ENCODE measurements at regions of chr12 and their contacts with region 1.

Region 1: GRCh38 chr12:3218228-3219171 is 141.3 kb downstream of the TSPAN9 start:
- DNase-seq: no peak
- H3K4me3 ChIP-seq: peak overlapping the region in 1 of 2 donors; percentile 5
- H3K27ac ChIP-seq: peak overlapping the region; percentile 85
- H3K4me1 ChIP-seq: peaks cover 58% of the 10 kb centered on the region
- H3K27me3 ChIP-seq: no peaks in the 10 kb centered on the region
- CTCF ChIP-seq: no peak
- POLR2A ChIP-seq: no peak

Region 2: DNA sequence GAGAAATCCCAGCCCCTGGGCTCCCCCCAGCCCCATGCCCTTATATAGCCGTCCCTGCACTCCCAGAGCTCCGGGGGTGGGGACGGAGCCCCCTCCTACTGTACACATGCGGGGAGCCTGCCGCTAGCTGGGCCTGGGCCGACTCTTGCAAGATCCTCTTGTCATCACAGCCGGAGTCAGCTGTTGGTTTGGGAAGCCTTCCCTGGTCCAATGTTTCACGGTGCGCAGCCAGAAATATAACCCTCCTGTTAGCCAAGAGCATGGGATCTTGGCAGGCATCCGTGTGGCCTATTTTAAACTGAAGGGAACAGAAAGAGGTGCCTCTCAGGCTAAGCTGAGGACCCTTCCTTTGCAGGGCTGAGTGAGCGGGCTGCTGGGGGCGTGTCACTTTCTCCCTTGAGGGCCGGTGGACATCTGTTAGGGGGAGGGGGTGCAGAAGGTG is 34.0 kb after region 1 on chr12:
- intact Hi-C with region 1: loop called (anchors 5 kb)
- DNase-seq: peak in 1 of 2 donors; percentile 93
- H3K4me3 ChIP-seq: no peak overlapping the region
- H3K27ac ChIP-seq: peak overlapping the region; percentile 79
- H3K4me1 ChIP-seq: peaks cover 29% of the 10 kb centered on the region
- H3K27me3 ChIP-seq: no peaks in the 10 kb centered on the region
- CTCF ChIP-seq: no peak
- POLR2A ChIP-seq: no peak

Measured in vagina (tissue), 2 donors.